ENCODE measurements at regions of chr19 and their contacts with region 1.

Region 1: GRCh38 chr19:53103198-53103944 is at the start of gene ZNF160:
- DNase-seq: peak; percentile 97 to 100 (median 98)
- H3K4me3 ChIP-seq: peak within 1 kb of the TSS; percentile 68 to 98 (median 92)
- H3K27ac ChIP-seq: peak within 1 kb of the TSS; percentile 15 to 98 (median 91)
- H3K27me3 ChIP-seq: no peaks in the 10 kb centered on the region
- CTCF ChIP-seq: peak in 7 of 56 donors; percentile 4 to 39 (median 21)
- total RNA-seq, gene ZNF160: 31.4 to 79.2 (median 44.7) TPM

Region 2: DNA sequence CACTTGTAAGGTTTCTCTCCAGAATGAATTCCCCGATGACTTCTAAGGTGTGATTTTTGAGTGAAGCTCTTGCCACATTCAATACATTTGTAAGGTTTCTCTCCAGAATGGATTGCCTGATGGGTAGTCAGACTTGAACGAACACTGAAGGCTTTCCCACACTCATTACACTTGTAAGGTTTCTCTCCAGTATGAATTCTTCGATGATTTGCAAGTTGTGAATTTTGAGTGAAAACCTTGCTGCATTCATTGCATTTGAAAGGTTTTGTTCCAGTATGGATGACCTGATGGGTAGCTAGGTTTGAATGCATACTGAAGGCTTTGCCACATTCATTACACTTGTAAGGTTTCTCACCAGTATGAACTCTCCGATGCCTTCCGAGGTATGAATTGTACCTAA is 34.5 kb before region 1 on chr19:
- intact Hi-C with region 1: no loop called
- DNase-seq: no peak
- H3K4me3 ChIP-seq: no peak overlapping the region
- H3K27ac ChIP-seq: no peak overlapping the region
- H3K27me3 ChIP-seq: no peaks in the 10 kb centered on the region
- CTCF ChIP-seq: no peak

Region 3: GRCh38 chr19:53132141-53132991 is 29.0 kb after region 1 on chr19 and contains the start of gene ZNF415:
- intact Hi-C with region 1: loop called in 1 of 2 experiments (anchors 2 kb)
- DNase-seq: peak; percentile 80 to 91 (median 86)
- H3K4me3 ChIP-seq: peak within 1 kb of the TSS; percentile 47 to 90 (median 75)
- H3K27ac ChIP-seq: peak within 1 kb of the TSS in 53 of 59 donors; percentile 33 to 93 (median 75)
- H3K27me3 ChIP-seq: no peaks in the 10 kb centered on the region
- CTCF ChIP-seq: peak in 14 of 56 donors; percentile 3 to 42 (median 20)
- total RNA-seq, gene ZNF415: 24.2 to 55.5 (median 36.6) TPM

Region 4: DNA sequence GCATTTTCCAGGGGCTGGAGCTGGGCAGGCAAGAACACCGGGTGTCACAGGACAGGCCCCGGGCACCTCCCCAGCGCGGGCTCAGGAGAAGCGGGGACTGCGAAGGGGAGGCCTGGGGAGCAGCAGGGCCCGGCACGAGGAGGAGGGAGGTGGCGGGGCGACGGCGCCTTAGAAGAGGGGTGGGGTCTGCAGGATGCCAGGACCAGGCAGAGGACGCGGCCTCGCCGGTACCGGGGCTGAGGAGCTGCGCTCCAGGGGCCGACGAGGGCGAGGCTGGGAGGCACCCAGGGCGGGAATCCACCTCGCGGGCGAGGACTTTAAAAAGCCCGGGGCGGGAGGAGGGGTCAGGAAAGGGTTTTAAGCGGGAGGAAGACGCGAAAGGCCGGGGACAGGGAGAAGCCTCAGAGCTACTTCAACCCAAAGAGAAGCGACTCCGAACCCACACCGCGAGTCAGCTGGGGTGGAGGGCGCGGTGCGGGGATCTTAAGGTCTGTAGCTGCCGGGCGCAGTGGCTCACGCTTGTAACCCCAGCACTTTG is 54.8 kb after region 1 on chr19:
- intact Hi-C with region 1: loop called in 1 of 2 experiments (anchors 2 kb)
- DNase-seq: peak in 6 of 10 donors; percentile 21 to 57 (median 35)
- H3K4me3 ChIP-seq: peak overlapping the region; percentile 49 to 83 (median 72)
- H3K27ac ChIP-seq: peak overlapping the region in 52 of 59 donors; percentile 11 to 86 (median 61)
- H3K27me3 ChIP-seq: no peaks in the 10 kb centered on the region
- CTCF ChIP-seq: no peak